ENCODE measurements at regions of chr12 and their contacts with region 1.

Region 1: DNA sequence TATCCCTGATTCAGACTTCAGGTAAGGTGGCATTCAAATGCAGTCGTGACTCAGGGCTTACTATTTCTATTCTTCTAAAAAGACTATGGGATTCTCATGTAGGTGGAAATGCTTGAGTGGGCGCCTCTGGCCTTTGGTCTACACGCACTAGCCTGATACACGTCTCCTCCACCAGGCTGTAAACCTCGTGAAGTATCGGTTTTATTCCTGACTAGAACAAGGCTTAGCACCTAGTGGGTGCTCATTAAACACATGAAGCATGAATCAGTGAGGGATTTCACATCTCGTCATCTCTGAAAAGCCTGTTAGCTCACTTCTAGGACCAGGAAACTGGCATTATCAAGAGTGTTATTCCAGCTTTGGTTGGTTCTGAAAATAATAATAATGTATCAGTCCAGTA is 17.7 kb upstream of the HNF1A start:
- DNase-seq: no peak
- ATAC-seq: no peak
- H3K4me3 ChIP-seq: no peak overlapping the region
- H3K4me3 Mint-ChIP-seq: peak overlapping the region in 2 of 10 donors; percentile 26 to 48
- H3K27ac ChIP-seq: no peak overlapping the region
- H3K27ac Mint-ChIP-seq: peak overlapping the region in 3 of 9 donors; percentile 55 to 89 (median 58)
- H3K4me1 ChIP-seq: peaks cover 2 to 20% of the 10 kb centered on the region in 2 donors
- H3K4me1 Mint-ChIP-seq: peaks cover 3 to 26% (median 20%) of the 10 kb centered on the region in 7 donors
- H3K27me3 ChIP-seq: no peaks in the 10 kb centered on the region
- H3K27me3 Mint-ChIP-seq: no peaks in the 10 kb centered on the region

Region 2: DNA sequence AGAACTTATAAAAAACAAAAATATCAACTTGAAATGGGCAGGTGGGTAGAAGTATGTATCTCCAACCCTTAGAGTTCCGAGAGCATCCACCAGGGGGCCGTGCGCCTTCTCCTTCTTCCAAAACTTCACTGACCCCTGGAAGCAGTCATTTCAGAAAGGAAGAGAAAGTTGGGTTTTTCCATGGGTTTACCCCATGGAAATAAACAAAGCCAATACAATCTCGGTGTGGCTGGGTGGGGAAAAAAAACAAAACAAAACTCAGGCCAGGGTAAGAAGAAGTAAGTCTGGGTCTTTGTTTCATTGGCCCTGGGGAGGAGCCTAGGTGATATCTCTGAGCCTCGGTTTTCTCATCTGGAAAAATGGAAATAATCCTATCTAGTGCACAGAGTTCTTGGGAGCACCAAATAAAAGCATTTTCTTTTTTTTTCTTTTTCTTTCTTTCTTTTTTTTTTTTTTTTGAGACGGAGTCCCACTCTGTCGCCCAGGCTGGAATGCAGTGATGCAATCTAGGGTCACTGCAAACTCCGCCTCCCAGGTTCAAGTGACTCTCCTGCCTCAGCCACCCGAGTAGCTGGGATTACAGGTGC is 15.9 kb before region 1 on chr12:
- CTCF ChIA-PET with region 1: interaction called, 3 read pairs
- POLR2A ChIA-PET with region 1: no interaction called
- intact Hi-C with region 1: loop called (anchors 1 to 2 kb)
- DNase-seq: peak; percentile 34 to 71 (median 50)
- ATAC-seq: peak; percentile 60
- H3K4me3 ChIP-seq: no peak overlapping the region
- H3K4me3 Mint-ChIP-seq: no peak overlapping the region
- H3K27ac ChIP-seq: no peak overlapping the region
- H3K27ac Mint-ChIP-seq: peak overlapping the region in 2 of 9 donors; percentile 1 to 30
- H3K4me1 ChIP-seq: no peaks in the 10 kb centered on the region
- H3K4me1 Mint-ChIP-seq: peaks cover 0 to 6% (median 2%) of the 10 kb centered on the region in 7 donors
- H3K27me3 ChIP-seq: no peaks in the 10 kb centered on the region
- H3K27me3 Mint-ChIP-seq: peaks cover 0 to 8% (median 0%) of the 10 kb centered on the region in 5 donors

Region 3: DNA sequence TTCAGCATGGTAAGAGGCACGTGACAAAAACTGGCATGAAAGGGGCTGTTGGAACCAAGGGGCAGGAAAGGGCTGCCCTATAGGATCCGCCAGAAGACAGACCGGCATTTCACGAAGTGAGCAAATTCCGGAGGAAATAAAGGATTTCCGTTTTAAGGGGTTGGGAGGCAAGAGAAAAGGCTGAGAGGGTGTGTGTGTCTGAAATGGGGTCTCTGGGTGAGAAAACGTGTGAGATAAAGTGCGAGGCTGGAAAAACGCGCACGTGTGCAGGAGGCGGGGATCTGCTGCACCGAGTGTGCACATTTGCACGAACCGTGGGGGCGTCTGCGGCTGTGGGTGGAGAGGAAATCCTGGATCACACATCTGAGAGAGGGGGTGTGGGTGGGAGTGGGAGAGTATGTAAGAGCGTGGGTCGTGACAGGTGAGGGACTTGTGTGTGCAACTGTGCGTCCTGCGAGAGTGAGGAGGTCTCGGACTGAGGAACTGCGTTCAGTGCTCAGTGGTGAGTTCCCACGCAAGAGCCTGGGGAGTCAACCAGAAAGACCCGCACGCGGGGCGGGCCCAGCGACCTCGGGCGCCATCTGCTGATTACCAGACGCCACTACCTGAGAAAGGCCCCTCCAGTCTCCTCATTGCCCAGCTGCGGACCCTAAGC is 135.0 kb after region 1 on chr12:
- CTCF ChIA-PET with region 1: no interaction called
- POLR2A ChIA-PET with region 1: no interaction called
- intact Hi-C with region 1: no loop called
- DNase-seq: peak; percentile 60 to 81 (median 70)
- ATAC-seq: peak; percentile 91
- H3K4me3 ChIP-seq: peak overlapping the region; percentile 66
- H3K4me3 Mint-ChIP-seq: peak overlapping the region; percentile 81 to 95 (median 87)
- H3K27ac ChIP-seq: no peak overlapping the region
- H3K27ac Mint-ChIP-seq: peak overlapping the region in 6 of 9 donors; percentile 41 to 88 (median 69)
- H3K4me1 ChIP-seq: peaks cover 34 to 42% of the 10 kb centered on the region in 2 donors
- H3K4me1 Mint-ChIP-seq: peaks cover 28 to 56% (median 52%) of the 10 kb centered on the region in 7 donors
- H3K27me3 ChIP-seq: no peaks in the 10 kb centered on the region
- H3K27me3 Mint-ChIP-seq: peaks cover 0 to 22% (median 4%) of the 10 kb centered on the region in 5 donors